ENCODE measurements at regions of chr2 and their contacts with region 1.

Region 1: DNA sequence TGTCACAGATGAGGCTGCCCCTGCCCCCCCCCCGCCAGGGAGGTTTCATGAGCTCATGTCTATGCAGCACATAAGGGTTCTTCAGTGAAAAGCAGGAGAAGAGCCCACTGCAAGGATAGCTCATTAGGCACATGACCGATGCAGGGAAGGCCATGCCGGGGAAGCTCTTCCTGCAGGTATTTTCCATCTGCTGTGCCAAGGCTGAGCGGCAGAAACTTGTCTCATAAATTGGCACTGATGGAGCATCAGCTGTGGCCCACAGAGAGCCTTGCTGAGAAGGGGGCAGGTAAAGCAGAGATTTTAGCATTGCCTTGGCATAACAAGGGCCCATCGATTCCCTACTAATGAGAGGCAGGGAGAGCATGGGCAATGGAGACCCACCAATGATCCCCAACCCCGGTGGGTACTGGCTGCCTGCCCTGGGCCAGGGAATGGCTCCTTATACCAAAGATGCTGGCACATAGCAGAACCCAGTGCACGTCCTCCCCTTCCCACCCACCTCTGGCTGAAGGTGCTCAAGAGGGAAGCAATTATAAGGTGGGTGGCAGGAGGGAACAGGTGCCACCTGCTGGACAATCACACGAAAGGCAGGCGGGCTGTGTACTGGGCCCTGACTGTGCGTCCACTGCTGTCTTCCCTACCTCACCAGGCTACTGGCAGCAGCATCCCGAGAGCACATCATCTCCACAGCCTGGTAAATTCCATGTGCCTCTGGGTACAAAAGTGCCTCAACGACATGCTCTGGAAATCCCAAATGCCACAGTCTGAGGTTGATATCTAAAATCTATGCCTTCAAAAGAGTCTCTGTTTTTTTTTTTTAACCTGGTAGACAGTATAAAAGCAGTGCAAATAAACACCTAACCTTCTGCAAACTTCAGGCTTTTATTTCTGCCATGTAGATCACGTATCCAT is 41.4 kb downstream of the STEAP3 start:
- DNase-seq: peak; percentile 61
- H3K4me3 ChIP-seq: no peak overlapping the region
- H3K27ac ChIP-seq: no peak overlapping the region
- H3K4me1 ChIP-seq: no peaks in the 10 kb centered on the region
- CTCF ChIP-seq: peak; percentile 84

Region 2: GRCh38 chr2:119028327-119029174 is 236.5 kb before region 1 on chr2:
- CTCF ChIA-PET with region 1: no interaction called
- POLR2A ChIA-PET with region 1: no interaction called
- intact Hi-C with region 1: loop called (anchors 5 kb)
- DNase-seq: peak; percentile 27
- H3K4me3 ChIP-seq: no peak overlapping the region
- H3K27ac ChIP-seq: no peak overlapping the region
- H3K4me1 ChIP-seq: no peaks in the 10 kb centered on the region
- CTCF ChIP-seq: peak; percentile 76

Region 3: DNA sequence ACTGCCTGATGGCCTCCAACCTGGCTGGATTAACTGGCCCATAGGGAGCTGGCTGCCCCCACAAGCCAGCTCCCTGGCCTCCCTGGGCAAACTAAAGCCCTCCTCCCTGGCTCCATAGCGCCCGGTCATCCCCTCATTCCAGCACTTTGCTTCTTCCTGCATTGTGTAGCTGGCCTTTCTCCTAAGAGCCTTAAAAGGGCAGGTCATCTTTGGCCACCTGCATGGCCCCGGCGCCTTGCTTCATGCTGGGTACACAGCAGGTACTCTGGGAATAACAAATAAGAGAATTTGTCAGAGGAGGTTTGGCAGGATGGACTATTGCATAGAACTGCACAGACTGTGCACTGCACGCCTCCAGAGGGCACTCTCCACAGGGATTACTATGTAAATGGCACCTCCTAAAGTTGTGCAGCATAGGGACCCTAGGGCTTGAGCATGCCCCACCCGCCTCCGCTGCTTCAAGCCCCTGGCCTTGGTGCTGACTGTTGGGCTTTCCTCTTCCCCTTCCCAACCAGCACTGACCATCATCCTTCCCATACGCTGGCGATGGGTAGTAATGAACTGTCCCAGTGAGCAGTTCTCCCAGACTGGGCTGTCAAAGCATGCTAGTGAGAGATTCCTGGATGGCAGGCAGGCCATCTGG is 30.5 kb before region 1 on chr2:
- CTCF ChIA-PET with region 1: no interaction called
- POLR2A ChIA-PET with region 1: no interaction called
- intact Hi-C with region 1: loop called (anchors 5 kb)
- DNase-seq: peak; percentile 43
- H3K4me3 ChIP-seq: no peak overlapping the region
- H3K27ac ChIP-seq: no peak overlapping the region
- H3K4me1 ChIP-seq: no peaks in the 10 kb centered on the region
- CTCF ChIP-seq: peak; percentile 74

Region 4: GRCh38 chr2:119301413-119301812 is 36.4 kb after region 1 on chr2:
- CTCF ChIA-PET with region 1: no interaction called
- POLR2A ChIA-PET with region 1: no interaction called
- intact Hi-C with region 1: no loop called
- DNase-seq: no peak
- H3K4me3 ChIP-seq: no peak overlapping the region
- H3K27ac ChIP-seq: no peak overlapping the region
- H3K4me1 ChIP-seq: peaks cover 31% of the 10 kb centered on the region
- CTCF ChIP-seq: no peak

Measured in OCI-LY7 (cell line).